Activated CD4-positive, alpha-beta memory T cell treated with anti-CD3 and anti-CD28 coated beads for 36 hours (primary cell): ENCODE measurements at regions of chr12 and their contacts with region 1.

Region 1: DNA sequence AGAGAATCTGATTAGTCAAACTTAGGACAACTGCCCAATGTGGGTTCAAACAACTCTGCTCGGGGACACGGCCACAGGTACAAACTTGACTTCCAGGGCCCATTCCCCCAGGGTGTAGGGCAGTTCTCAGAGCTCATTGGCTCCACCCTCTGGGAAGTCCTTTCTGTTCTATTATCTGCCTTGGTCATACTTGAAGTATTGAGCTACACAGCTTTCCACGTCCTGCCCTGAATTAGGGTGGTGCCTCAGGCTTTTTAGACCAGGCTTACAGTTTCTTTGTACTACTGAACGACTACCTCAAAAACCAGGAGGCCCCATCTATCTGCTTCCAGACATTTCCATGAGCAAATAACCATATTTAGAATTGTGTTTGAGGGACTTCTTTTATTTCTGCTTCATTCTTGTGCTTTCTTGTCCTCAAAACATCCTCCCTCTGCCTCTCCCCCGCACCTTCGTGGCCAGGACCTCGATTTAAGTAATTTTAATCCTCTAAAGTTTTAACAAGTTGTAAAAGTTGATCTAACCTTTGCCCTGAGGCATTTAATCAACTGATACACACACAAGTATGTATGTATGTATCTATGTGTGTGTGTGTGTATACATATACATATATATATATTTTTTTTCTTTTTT is 281.7 kb upstream of the AMIGO2 start:
- DNase-seq: peak; percentile 73
- H3K4me3 Mint-ChIP-seq: peak overlapping the region; percentile 66
- H3K27ac Mint-ChIP-seq: peak overlapping the region; percentile 99
- H3K4me1 Mint-ChIP-seq: peaks cover 60% of the 10 kb centered on the region
- H3K27me3 Mint-ChIP-seq: no peaks in the 10 kb centered on the region

Region 2: GRCh38 chr12:47079468-47079980 is 282.0 kb before region 1 on chr12 and contains the starts of genes AMIGO2 and PCED1B:
- CTCF ChIA-PET with region 1: interaction called, 3 read pairs
- POLR2A ChIA-PET with region 1: no interaction called
- intact Hi-C with region 1: loop called (anchors 2 kb)
- DNase-seq: peak; percentile 83
- H3K4me3 Mint-ChIP-seq: peak within 1 kb of the TSS; percentile 99
- H3K27ac Mint-ChIP-seq: peak within 1 kb of the TSS; percentile 92
- H3K4me1 Mint-ChIP-seq: peaks cover 72% of the 10 kb centered on the region
- H3K27me3 Mint-ChIP-seq: no peaks in the 10 kb centered on the region
- total RNA-seq, gene AMIGO2: 12.4 to 13.6 TPM
- total RNA-seq, gene PCED1B: 133 to 136 TPM

Region 3: DNA sequence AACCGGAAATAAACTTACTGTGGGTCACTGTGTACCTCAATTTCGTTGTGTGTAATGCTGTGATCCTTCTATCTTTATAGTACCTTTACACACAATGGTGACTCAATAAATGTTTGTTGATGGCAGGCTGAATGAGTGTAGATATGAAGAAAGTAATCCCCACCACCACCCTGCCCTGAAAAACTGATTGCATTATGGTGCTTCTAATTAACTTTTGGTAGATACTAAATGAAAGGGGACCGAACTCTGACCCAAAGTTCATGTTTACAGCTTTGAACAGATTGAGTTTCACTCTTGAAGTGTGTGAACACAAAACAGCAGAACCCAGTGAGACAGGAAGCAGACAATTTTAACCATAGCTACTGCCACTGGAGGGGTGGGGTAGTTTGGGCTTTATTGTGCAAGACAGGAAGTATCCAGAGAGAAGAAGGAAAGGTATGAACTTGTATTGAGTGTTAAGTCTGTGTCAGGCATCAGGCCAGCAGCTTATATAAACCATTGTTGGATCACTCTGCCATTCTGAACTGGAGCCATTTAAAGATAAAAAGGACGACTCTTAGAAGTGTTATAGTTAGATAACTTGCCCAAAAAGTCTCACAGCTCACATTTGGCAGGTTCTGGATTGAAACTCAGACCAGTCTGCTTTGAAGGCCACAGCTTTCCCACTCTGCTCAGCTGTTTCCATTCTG is 84.7 kb before region 1 on chr12:
- CTCF ChIA-PET with region 1: no interaction called
- POLR2A ChIA-PET with region 1: no interaction called
- intact Hi-C with region 1: loop called (anchors 1 kb)
- DNase-seq: peak; percentile 70
- H3K4me3 Mint-ChIP-seq: peak overlapping the region; percentile 33
- H3K27ac Mint-ChIP-seq: peak overlapping the region; percentile 95
- H3K4me1 Mint-ChIP-seq: peaks cover 82% of the 10 kb centered on the region
- H3K27me3 Mint-ChIP-seq: no peaks in the 10 kb centered on the region

Region 4: GRCh38 chr12:47350062-47350408 is 11.5 kb before region 1 on chr12:
- CTCF ChIA-PET with region 1: interaction called, 7 read pairs
- POLR2A ChIA-PET with region 1: interaction called, 3 read pairs
- intact Hi-C with region 1: loop called (anchors 1 kb)
- DNase-seq: no peak
- H3K4me3 Mint-ChIP-seq: peak overlapping the region; percentile 58
- H3K27ac Mint-ChIP-seq: peak overlapping the region; percentile 100
- H3K4me1 Mint-ChIP-seq: peaks cover 69% of the 10 kb centered on the region
- H3K27me3 Mint-ChIP-seq: no peaks in the 10 kb centered on the region